PC-9 (cell line): ENCODE measurements at regions of chr12 and their contacts with region 1.

Region 1: DNA sequence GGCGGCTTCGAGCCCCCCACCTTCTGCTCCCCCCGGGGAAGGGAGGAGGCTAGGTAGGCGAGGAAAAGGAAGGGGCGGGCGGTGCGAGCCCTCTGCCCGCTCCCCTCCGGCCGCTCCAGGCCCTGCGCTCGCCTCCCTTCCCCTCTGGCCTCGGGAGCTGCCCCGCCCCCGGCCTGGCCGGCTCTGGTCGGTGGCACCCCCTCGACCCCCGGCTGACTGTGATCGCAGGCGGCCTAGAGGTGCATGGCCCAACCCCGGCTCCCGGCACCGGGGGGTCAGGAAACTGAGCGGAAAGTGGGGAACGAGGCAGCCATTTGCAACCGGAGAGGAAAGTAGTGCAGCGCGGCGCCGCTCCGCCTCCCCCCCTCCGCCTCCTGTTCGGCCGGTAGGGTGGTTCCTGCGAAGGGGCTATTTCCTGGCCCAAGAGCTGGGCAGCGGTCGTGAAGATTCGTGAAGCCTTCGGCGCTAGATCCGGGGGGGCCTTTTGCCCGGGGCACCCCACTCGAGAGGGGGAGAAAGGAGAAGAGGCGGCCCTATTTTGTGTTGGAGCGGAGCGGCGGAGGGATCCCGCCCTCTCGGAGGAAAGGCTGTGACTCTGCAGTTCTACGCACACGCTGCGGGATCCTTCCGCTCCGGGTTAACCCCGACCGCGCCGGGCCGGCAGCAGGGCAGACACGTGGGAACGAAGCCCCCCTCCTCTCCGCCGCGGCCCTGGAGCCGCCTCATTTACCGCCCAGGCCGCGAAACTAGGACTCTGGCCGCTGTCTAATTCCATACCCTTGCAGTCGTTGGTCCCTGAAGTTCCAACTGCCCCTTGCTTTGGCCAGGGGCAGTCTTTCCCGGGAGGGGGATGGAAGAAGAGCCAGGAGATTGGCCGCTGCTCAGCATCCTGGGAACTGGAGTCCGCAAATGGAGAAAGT is at the start of gene KMT2D:
- DNase-seq: peak; percentile 72 to 87
- H3K4me3 ChIP-seq: peak within 1 kb of the TSS; percentile 87
- H3K27ac ChIP-seq: peak within 1 kb of the TSS; percentile 84
- H3K4me1 ChIP-seq: peaks cover 34% of the 10 kb centered on the region
- H3K27me3 ChIP-seq: no peaks in the 10 kb centered on the region
- CTCF ChIP-seq: no peak
- total RNA-seq, gene KMT2D: 94.0 and 97.9 TPM in 2 replicates

Region 2: DNA sequence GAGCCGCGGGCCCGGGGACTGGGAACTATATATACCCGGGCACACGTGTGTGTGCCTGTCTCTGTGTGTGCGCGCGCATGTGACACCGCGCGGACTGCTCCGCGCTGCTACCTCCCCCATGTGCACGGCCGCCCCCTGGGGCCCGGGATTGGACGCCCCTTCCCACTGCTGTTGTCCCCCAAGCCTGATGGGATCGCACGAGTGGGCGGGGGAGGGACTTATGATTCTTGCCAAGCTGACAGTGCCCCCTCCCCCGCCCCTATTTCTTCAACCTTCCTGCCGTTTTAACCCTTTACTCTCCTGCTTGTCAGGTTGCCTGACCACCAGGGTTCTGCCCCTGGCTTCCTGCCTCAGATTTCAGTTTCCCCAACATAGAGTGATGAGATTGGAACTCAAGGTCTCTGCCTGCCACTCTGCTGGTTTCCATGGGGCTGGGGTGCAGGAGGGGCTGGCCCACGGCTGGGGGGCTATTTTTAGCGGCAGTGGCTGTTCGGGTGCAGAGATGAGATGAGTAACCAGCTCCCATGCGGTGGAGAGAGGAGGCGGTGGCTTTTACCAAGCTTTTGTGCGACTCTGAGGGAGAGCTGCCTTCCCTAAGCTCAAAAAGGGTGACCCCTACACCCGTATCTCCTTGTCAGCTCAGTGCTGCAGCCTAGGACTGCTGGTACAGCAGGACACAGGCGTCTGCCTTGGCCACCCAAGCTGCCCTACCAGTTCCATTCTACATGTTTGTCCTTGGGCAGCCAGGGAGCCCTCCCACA is 60.9 kb before region 1 on chr12 and contains the start of gene DDN:
- CTCF ChIA-PET with region 1: no interaction called
- POLR2A ChIA-PET with region 1: no interaction called
- intact Hi-C with region 1: no loop called
- DNase-seq: no peak
- H3K4me3 ChIP-seq: peak within 1 kb of the TSS; percentile 61
- H3K27ac ChIP-seq: no peak within 1 kb of the TSS
- H3K4me1 ChIP-seq: peaks cover 14% of the 10 kb centered on the region
- H3K27me3 ChIP-seq: no peaks in the 10 kb centered on the region
- CTCF ChIP-seq: no peak
- total RNA-seq, gene DDN: 0.10 and 0.17 TPM in 2 replicates

Region 3: DNA sequence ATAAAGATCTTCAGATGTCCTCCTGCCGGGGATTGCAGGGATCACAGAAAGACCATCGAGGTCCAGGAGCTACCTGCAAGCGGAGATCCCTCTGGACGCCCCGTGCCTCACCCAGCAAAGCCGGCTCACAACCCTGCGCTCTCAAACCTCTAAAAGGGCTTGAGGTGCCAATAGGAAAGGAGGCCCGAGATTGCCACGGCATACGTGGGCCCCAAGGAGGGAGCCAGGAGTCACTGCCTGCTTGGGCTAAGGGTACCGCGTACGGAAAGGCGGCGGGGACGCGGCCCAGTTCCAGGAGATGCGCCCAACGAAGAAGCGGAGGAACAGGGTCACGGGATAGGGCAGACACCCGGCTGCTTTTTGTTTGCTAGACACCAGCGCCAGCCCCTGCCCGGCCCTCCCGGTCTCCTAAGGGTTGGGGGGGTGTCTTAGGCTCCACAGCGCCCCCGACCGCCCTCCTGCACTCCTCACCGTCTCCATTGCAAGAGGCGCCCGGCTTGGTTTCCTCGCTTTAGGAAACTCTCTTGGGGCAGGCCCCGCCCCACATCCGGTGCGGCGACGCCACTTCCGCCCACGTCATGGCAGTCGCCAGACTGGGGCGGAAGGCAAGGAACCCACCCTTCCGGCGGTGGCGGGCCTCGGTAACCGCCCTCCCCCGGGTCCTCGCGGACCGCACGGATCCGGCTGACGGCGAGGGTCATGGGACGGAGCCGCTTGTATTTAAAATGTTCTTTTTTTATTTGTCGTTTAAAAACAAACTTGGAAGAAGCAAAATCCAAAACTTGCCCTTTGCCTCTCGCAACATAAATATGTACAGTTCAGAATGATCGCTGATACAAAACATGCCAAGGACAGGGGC is 42.0 kb before region 1 on chr12 and contains the start of gene PRKAG1:
- CTCF ChIA-PET with region 1: no interaction called
- POLR2A ChIA-PET with region 1: interaction called, 4 read pairs
- intact Hi-C with region 1: loop called (anchors 5 kb)
- DNase-seq: peak; percentile 87 to 93
- H3K4me3 ChIP-seq: peak within 1 kb of the TSS; percentile 65
- H3K27ac ChIP-seq: peak within 1 kb of the TSS; percentile 91
- H3K4me1 ChIP-seq: peaks cover 14% of the 10 kb centered on the region
- H3K27me3 ChIP-seq: no peaks in the 10 kb centered on the region
- CTCF ChIP-seq: no peak; the same call in 1 of the 2 replicates
- total RNA-seq, gene PRKAG1: 48.8 and 53.6 TPM in 2 replicates

Region 4: GRCh38 chr12:49030714-49031552 is 29.6 kb before region 1 on chr12:
- CTCF ChIA-PET with region 1: no interaction called
- POLR2A ChIA-PET with region 1: no interaction called
- intact Hi-C with region 1: no loop called
- DNase-seq: no peak
- H3K4me3 ChIP-seq: no peak overlapping the region
- H3K27ac ChIP-seq: no peak overlapping the region
- H3K4me1 ChIP-seq: no peaks in the 10 kb centered on the region
- H3K27me3 ChIP-seq: no peaks in the 10 kb centered on the region
- CTCF ChIP-seq: no peak

Region 5: GRCh38 chr12:49121047-49121696 is 60.7 kb after region 1 on chr12:
- CTCF ChIA-PET with region 1: interaction called, 13 read pairs
- POLR2A ChIA-PET with region 1: interaction called, 8 read pairs
- intact Hi-C with region 1: loop called (anchors 1 kb)
- DNase-seq: peak in 1 of 2 experiments; percentile 75
- H3K4me3 ChIP-seq: no peak overlapping the region
- H3K27ac ChIP-seq: no peak overlapping the region
- H3K4me1 ChIP-seq: no peaks in the 10 kb centered on the region
- H3K27me3 ChIP-seq: no peaks in the 10 kb centered on the region
- CTCF ChIP-seq: peak; percentile 73

Region 6: GRCh38 chr12:49232940-49233841 is 172.7 kb after region 1 on chr12:
- CTCF ChIA-PET with region 1: interaction called, 6 read pairs
- POLR2A ChIA-PET with region 1: no interaction called
- intact Hi-C with region 1: loop called (anchors 1 kb)
- DNase-seq: no peak
- H3K4me3 ChIP-seq: no peak overlapping the region
- H3K27ac ChIP-seq: no peak overlapping the region
- H3K4me1 ChIP-seq: 0 out of 2 replicates have a peak, but pooled peaks cover 3% of the 10 kb centered on the region
- H3K27me3 ChIP-seq: no peaks in the 10 kb centered on the region
- CTCF ChIP-seq: no peak

Region 7: GRCh38 chr12:49342066-49342913 is 281.8 kb after region 1 on chr12:
- CTCF ChIA-PET with region 1: no interaction called
- POLR2A ChIA-PET with region 1: no interaction called
- intact Hi-C with region 1: loop called (anchors 5 kb)
- DNase-seq: peak in 1 of 2 experiments; percentile 74
- H3K4me3 ChIP-seq: no peak overlapping the region
- H3K27ac ChIP-seq: no peak overlapping the region
- H3K4me1 ChIP-seq: peaks cover 19% of the 10 kb centered on the region
- H3K27me3 ChIP-seq: peaks cover 44% of the 10 kb centered on the region
- CTCF ChIP-seq: peak; percentile 71